ENCODE measurements at regions of chr1 and their contacts with region 1.

Region 1: GRCh38 chr1:156383023-156383422 is 14.0 kb downstream of the RHBG start:
- DNase-seq: peak; percentile 92

Region 2: DNA sequence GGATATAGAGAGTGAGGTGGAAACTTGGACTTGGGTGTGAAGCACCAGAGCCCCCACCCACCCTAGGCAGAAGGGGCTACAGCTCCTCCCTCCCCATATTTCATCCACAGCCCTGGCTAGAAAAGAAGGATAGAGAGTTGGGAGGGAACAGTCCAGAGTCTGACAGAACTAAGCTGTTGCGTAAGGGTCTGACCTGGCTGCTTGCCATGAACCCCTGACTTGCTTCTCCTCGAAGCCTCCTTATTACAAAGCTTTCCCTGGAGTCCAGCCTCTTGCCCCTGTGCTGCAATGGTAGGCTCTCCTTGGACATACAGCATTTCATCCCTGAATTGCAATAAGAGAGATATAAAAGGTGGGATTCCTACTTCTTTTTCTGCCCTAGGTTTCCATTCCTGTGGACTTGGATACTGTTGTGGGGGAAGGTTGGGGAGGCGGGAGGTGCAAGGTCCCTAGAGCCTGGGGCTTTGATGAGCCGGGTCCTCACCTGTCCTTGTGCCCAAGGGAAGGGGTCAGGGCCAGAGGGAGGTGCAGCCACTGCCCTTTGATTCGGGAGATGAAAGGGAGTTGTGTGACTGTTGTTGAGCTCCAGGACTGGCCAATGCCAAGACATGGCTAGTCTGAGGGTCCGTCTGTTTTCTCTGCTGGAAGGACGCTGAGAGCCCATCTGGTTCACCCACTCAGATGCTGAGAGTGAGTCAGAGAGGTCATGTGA is 11.3 kb before region 1 on chr1:
- CTCF ChIA-PET with region 1: interaction called, 18 read pairs
- POLR2A ChIA-PET with region 1: no interaction called
- DNase-seq: no peak

Region 3: DNA sequence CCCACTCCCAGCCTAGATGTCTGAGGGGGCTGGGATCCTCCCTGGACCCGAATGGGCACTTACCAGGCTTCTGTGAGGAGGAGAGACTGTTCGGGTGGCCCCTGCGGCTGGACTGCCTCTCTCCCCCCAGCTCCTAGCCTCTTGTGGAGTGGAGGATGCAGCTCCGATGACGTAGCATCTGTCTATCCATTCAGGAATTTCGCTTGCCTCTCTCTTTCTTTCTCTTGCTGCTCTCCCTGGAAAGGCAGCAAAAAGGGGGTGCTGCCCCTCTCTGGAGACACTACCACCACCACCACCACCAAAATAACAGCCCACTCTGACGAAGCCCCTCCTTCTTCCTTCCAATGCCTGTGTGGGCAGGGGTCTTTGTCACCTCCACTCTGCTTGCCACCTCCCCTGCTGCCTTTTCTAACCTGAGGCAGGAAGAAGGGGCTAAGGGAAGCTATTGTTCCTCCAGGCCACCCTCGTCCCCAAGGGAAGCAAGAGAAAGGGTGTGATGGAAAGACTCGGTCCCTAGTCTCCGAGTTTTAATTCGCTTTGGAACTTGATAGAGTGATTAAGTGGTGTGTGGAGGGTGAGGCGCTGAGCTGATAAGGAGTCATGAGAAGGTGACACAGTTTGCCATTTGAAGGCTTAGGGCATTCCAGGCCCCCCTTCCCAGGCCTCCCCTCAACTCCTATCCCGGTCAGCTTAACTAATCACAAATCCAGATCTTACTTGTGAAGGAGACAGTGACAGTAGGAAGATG is 46.5 kb after region 1 on chr1:
- CTCF ChIA-PET with region 1: interaction called, 11 read pairs
- POLR2A ChIA-PET with region 1: no interaction called
- DNase-seq: no peak

Region 4: DNA sequence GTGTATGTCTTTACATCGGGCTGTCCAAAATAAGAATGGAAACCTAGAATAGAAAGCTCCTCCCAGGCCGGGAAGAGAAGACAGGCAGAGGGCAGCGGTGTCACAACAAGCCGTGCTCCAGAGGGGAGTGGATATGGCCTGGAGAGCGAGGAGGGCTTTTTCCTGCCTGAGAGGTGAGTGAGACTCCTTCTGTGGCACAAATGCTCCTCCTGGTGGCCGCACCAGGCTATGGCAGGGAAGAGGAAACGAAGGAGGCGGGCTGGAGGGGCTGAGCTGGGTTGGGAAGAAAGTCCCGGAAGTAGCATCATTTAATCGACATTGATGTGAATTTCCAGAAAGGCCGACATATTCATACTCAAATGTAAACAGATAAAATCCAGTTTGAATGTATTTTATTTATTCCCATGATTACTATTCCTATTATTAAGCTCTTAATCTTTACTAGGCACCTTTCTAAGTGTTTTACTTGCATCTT is 62.8 kb after region 1 on chr1:
- CTCF ChIA-PET with region 1: interaction called, 125 read pairs
- POLR2A ChIA-PET with region 1: interaction called, 5 read pairs
- DNase-seq: peak; percentile 92

Region 5: GRCh38 chr1:156456622-156457465 is 73.8 kb after region 1 on chr1:
- CTCF ChIA-PET with region 1: interaction called, 10 read pairs
- POLR2A ChIA-PET with region 1: interaction called, 3 read pairs
- DNase-seq: peak; percentile 97